ENCODE measurements at regions of chr3 and their contacts with region 1.

Region 1: DNA sequence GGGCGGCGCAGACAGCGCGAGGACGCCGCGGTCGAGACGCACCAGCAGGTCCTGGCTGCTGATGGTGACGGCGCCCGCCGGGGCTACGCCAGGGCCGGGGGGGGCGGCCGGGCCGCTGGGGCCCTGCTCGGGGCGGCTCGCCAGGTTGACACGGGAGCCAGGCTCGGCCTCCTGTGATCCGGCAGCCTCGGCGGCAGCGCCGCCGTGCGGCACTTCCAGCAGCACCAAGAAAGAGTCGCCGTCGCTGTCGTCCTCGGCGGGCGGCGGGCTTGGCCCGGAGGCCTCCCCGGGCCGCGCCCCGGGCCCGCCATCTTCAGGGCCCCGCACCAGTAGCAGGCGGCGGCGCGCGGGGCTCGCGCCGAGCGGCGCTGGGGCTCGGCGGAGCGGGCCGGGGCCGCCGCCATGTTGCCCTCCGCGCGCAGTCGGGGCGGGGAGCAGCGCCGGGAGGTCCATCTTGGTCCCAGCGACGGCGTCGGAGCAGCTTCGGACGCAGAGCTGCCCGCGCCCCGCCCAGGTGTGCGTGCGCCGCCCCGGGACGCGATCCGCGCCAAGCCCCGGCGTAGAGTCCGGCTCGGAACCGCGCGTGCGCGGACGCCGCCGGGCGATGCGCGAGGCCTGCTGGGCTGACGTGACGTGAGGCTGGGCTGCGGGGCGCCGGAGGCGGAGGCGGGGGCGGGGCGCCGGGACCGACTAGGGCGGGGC is at the start of gene ZXDC:
- DNase-seq: peak; percentile 96
- ATAC-seq: peak; percentile 88
- H3K4me3 Mint-ChIP-seq: peak within 1 kb of the TSS; percentile 95
- H3K27ac Mint-ChIP-seq: peak within 1 kb of the TSS; percentile 91
- H3K4me1 Mint-ChIP-seq: peaks cover 40% of the 10 kb centered on the region
- H3K27me3 Mint-ChIP-seq: no peaks in the 10 kb centered on the region
- total RNA-seq, gene ZXDC: 21.6 to 23.1 TPM

Region 2: DNA sequence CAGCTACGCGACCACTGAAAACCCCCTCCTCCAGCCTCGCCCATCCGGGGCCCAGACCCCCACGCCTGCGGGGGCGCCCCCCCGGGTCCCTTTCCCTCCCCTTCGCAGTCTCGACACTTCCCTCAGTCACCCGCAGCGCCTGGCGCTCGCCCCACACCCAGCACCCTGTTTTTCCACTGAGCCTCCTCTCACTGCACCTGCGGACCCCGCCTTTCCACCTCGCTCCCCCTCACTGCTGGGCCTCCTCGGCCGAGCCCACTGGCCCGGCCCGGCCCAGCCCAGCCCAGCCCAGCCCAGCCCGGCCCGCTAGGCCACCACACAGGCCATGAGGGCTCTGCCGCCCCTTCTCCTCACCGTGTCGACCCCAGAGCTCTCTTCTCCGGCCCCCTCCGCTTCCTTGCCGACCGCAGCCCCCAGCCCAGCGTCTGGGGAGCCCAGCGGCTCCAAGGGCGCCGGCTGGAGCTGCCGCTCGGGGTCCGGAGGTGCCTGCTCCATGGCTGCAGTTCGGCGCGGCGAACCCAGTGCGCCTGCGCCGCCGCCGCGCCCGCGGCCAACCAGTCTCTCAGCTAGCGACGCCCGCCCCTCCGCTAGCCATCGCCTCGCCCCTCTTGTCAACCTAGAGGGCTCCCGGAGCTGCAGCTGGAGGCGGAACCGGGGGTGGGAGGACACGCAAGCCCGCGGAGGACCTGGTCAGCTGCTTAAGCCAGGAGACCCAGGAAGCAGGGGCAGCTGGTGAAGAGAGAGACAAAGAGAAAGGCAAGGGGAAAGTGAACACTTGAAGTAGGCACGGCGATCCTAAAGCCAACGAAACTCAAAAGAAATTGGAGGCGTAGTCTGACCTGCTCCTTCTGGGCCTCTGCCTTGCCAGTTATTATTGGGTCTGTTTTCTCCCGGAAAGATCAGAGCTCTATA is 955.6 kb before region 1 on chr3 and contains the start of gene SNX4:
- CTCF ChIA-PET with region 1: no interaction called
- POLR2A ChIA-PET with region 1: no interaction called
- intact Hi-C with region 1: loop called in 1 of 2 experiments (anchors 10 kb)
- DNase-seq: peak; percentile 93
- ATAC-seq: peak; percentile 99
- H3K4me3 Mint-ChIP-seq: peak within 1 kb of the TSS; percentile 85
- H3K27ac Mint-ChIP-seq: peak within 1 kb of the TSS; percentile 93
- H3K4me1 Mint-ChIP-seq: peaks cover 37% of the 10 kb centered on the region
- H3K27me3 Mint-ChIP-seq: no peaks in the 10 kb centered on the region
- total RNA-seq, gene SNX4: 36.2 to 36.3 TPM

Region 3: DNA sequence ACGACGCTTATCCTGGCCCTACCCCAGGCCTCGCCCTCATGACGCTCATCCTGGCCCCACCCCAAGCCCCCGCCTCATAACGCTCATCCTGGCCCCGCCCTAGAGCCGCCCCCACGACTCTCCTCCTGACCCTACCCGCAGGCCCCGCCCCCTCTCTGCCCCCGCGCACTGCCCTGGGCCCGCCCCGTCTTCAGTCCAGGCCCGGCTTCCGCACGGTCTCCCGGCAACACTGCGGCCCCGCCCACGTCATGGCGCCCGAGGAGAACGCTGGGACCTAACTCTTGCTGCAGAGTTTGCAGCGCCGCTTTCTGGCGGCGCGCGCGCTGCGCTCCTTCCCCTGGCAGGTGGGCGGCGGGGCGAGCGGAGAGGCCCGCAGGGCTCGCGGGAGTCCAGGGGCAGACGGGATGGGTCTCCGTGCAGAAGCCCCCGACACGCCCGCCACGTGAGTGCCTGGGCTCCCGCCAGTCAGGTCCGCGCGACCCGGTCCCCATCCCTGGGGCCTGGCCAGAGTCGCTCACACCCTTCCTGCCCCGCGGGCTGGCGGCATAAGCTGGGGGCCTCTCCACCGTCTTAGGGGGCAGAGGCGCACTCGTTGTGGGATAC is 559.1 kb before region 1 on chr3:
- CTCF ChIA-PET with region 1: no interaction called
- POLR2A ChIA-PET with region 1: no interaction called
- intact Hi-C with region 1: loop called (anchors 1 to 2 kb)
- DNase-seq: peak; percentile 99
- ATAC-seq: peak; percentile 94
- H3K4me3 Mint-ChIP-seq: peak overlapping the region; percentile 82
- H3K27ac Mint-ChIP-seq: peak overlapping the region; percentile 72
- H3K4me1 Mint-ChIP-seq: peaks cover 28% of the 10 kb centered on the region
- H3K27me3 Mint-ChIP-seq: no peaks in the 10 kb centered on the region

Region 4: DNA sequence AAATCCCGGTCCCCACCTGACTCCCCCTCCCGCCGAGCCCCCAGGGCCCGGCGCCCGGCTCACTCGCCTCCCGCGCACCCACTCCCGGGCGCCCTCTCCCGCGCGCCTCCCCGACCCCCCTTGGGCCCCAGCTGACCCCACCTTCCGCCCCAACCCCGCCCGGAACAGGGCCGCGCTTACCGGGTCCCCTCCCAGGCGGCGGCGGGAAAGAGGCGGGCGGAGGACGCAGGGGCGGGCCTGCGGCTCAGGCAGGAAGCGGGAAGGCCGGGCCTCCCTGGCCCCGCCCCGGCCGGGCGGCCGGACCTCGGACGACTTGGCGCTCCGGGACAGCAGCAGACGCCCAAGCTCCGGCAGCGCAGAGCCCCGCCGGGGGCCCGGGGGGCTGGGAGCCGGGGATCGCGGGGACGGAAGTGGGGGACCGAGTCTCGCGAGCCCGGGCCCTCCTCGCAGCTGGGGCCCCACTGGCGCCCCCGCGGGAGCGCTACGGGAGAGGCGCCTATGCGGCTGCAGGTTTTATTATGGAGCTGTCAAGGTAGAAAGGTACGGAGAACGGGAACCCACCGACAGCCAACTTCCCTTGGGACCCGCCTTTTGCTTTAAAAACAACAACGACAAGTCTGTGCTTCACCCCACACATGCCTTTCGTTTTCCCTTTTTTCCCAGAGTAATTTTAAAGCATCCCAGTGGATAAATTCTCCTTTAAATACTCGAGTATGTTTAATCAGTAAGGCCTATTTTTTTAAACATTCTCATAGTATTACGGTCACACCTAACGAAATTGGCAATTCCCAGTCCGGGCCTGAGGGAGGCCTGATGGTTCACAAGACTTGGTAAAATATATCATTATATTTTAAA is 391.4 kb before region 1 on chr3 and contains the start of gene SLC41A3:
- CTCF ChIA-PET with region 1: no interaction called
- POLR2A ChIA-PET with region 1: no interaction called
- intact Hi-C with region 1: loop called (anchors 1 to 5 kb)
- DNase-seq: peak; percentile 93
- ATAC-seq: peak; percentile 92
- H3K4me3 Mint-ChIP-seq: peak within 1 kb of the TSS; percentile 92
- H3K27ac Mint-ChIP-seq: peak within 1 kb of the TSS; percentile 96
- H3K4me1 Mint-ChIP-seq: peaks cover 24% of the 10 kb centered on the region
- H3K27me3 Mint-ChIP-seq: no peaks in the 10 kb centered on the region
- total RNA-seq, gene SLC41A3: 23.1 to 26.6 TPM

Region 5: GRCh38 chr3:126654571-126655383 is 179.2 kb after region 1 on chr3 and contains the start of gene TXNRD3:
- CTCF ChIA-PET with region 1: no interaction called
- POLR2A ChIA-PET with region 1: no interaction called
- intact Hi-C with region 1: loop called in 1 of 2 experiments (anchors 1 kb)
- DNase-seq: peak; percentile 87
- ATAC-seq: peak; percentile 95
- H3K4me3 Mint-ChIP-seq: peak within 1 kb of the TSS; percentile 74
- H3K27ac Mint-ChIP-seq: peak within 1 kb of the TSS; percentile 60
- H3K4me1 Mint-ChIP-seq: peaks cover 6% of the 10 kb centered on the region
- H3K27me3 Mint-ChIP-seq: peaks cover 5% of the 10 kb centered on the region
- total RNA-seq, gene TXNRD3: 2.5 to 3.5 TPM

Region 6: GRCh38 chr3:127590593-127591477 is 1115.3 kb after region 1 on chr3 and contains the start of gene TPRA1:
- CTCF ChIA-PET with region 1: no interaction called
- POLR2A ChIA-PET with region 1: no interaction called
- intact Hi-C with region 1: loop called in 1 of 2 experiments (anchors 2 kb)
- DNase-seq: peak; percentile 88
- ATAC-seq: peak; percentile 86
- H3K4me3 Mint-ChIP-seq: peak within 1 kb of the TSS; percentile 84
- H3K27ac Mint-ChIP-seq: peak within 1 kb of the TSS; percentile 96
- H3K4me1 Mint-ChIP-seq: peaks cover 25% of the 10 kb centered on the region
- H3K27me3 Mint-ChIP-seq: no peaks in the 10 kb centered on the region
- total RNA-seq, gene TPRA1: 22.5 to 24.8 TPM

Region 7: GRCh38 chr3:127672516-127673190 is 1197.1 kb after region 1 on chr3 and contains the start of gene ABTB1:
- CTCF ChIA-PET with region 1: no interaction called
- POLR2A ChIA-PET with region 1: no interaction called
- intact Hi-C with region 1: loop called in 1 of 2 experiments (anchors 1 kb)
- DNase-seq: peak; percentile 94
- ATAC-seq: peak; percentile 90
- H3K4me3 Mint-ChIP-seq: peak within 1 kb of the TSS; percentile 88
- H3K27ac Mint-ChIP-seq: peak within 1 kb of the TSS; percentile 96
- H3K4me1 Mint-ChIP-seq: peaks cover 22% of the 10 kb centered on the region
- H3K27me3 Mint-ChIP-seq: no peaks in the 10 kb centered on the region
- total RNA-seq, gene ABTB1: 8.3 to 9.6 TPM